Heart left ventricle (tissue), 16 donors: ENCODE measurements at regions of chr19 and their contacts with region 1.

Region 1: GRCh38 chr19:11125994-11126685 is 29.4 kb downstream of the SPC24 start:
- DNase-seq: peak; percentile 70 to 87 (median 82)
- ATAC-seq: peak; percentile 51 to 76 (median 68)
- H3K4me3 ChIP-seq: no peak overlapping the region
- H3K27ac ChIP-seq: peak overlapping the region in 1 of 12 donors; percentile 32
- H3K4me1 ChIP-seq: peaks cover 0 to 20% (median 11%) of the 10 kb centered on the region in 12 donors
- H3K27me3 ChIP-seq: no peaks in the 10 kb centered on the region
- CTCF ChIP-seq: peak; percentile 67 to 88 (median 80)
- POLR2A ChIP-seq: no peak

Region 2: GRCh38 chr19:10936661-10937084 is 189.5 kb before region 1 on chr19:
- intact Hi-C with region 1: loop called in 6 of 10 experiments (anchors 5 to 10 kb)
- DNase-seq: no peak
- ATAC-seq: peak; percentile 60 to 84 (median 79)
- H3K4me3 ChIP-seq: peak overlapping the region in 2 of 12 donors; percentile 0 to 26
- H3K27ac ChIP-seq: no peak overlapping the region
- H3K4me1 ChIP-seq: peaks cover 0 to 8% (median 0%) of the 10 kb centered on the region in 12 donors
- H3K27me3 ChIP-seq: no peaks in the 10 kb centered on the region
- CTCF ChIP-seq: peak; percentile 45 to 63 (median 58)
- POLR2A ChIP-seq: no peak

Region 3: DNA sequence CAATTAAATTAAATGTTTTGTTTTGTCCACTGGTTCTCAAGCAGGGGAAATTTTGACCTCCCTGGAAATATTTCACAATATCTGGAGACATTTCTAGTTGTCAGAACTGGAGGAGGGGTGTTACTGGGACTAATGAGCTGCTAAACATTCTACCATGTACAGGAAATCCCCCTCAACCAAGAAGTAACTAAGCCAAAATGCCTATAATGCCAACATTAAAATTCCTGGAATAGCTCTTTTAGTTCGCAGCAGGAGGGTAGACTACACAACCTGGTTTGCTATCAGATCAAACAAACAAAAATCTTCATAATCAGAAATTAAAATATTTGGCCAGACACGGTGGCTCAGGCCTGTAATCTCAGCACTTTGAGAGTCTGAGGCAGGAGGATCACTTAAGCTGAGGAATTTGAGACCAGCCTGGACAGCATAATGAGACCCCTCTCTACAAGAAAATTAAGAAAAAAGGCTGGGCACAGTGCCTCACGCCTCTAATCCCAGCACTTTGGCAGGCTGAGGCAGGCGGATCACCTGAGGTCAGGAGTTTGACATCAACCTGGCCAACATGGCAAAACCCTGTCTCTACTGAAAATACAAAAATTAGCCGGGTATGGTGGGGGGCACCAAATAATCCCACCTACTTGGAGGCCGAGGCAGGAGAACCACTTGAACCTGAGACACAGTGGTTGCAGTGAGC is 179.0 kb before region 1 on chr19:
- intact Hi-C with region 1: loop called in 1 of 10 experiments (anchors 10 kb)
- DNase-seq: no peak
- ATAC-seq: no peak
- H3K4me3 ChIP-seq: no peak overlapping the region
- H3K27ac ChIP-seq: no peak overlapping the region
- H3K4me1 ChIP-seq: peaks cover 0 to 5% (median 0%) of the 10 kb centered on the region in 12 donors
- H3K27me3 ChIP-seq: no peaks in the 10 kb centered on the region
- CTCF ChIP-seq: no peak
- POLR2A ChIP-seq: no peak

Region 4: DNA sequence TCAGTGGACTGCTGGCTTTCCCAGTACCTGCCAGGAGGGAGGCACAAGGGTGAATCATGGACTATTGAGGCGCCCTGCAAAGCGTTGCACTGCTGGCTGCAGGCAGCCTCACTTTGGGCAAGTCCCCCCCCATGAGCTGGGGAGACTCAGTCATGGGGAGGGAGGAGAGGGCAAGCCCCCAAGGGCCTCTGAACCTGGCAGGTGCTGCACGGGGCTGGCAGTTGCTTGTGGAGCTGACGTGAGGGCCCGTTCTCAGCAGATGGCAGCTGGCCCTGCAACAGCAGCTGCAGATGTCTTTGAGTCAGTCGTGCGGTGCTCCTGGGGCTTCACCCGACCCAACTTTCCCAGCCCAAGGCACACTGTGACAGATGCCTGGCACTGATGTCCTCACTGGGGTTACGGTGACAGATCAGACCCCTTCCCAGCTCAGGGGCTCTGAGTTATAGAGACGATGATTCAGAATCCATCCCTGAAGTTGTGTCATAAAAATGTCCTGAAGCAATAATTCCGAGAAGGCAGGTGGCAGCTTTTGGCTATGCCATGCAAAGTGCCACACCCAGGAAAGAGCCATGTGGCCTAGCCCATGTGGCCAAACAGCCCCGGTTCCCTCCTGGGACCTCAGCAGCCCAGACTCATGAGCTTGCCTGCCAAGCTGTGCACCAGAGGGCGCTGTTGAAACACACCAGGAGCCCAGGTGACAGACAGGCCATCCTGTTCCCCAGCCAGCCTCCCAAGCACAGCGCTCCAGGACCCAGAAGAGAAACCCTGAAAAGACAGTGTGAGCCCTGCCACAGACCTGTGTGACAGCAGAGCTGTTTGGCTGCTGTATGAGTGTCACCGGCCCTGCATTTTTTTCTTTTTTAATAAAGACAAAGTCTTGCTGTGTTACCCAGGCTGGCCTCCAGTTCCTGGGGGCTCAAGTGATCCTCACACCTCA is 90.4 kb before region 1 on chr19:
- intact Hi-C with region 1: loop called (anchors 2 to 10 kb)
- DNase-seq: peak; percentile 89 to 95 (median 92)
- ATAC-seq: peak; percentile 93 to 96 (median 93)
- H3K4me3 ChIP-seq: no peak overlapping the region
- H3K27ac ChIP-seq: peak overlapping the region in 4 of 12 donors; percentile 9 to 33 (median 20)
- H3K4me1 ChIP-seq: peaks cover 0 to 9% (median 4%) of the 10 kb centered on the region in 12 donors
- H3K27me3 ChIP-seq: no peaks in the 10 kb centered on the region
- CTCF ChIP-seq: peak; percentile 73 to 92 (median 87)
- POLR2A ChIP-seq: no peak

Region 5: GRCh38 chr19:11203194-11204075 is 77.3 kb after region 1 on chr19:
- intact Hi-C with region 1: loop called in 2 of 10 experiments (anchors 1 kb)
- DNase-seq: peak; percentile 82 to 89 (median 88)
- ATAC-seq: peak; percentile 75 to 83 (median 78)
- H3K4me3 ChIP-seq: peak overlapping the region in 9 of 12 donors; percentile 1 to 43 (median 35)
- H3K27ac ChIP-seq: peak overlapping the region; percentile 78 to 97 (median 90)
- H3K4me1 ChIP-seq: peaks cover 0 to 42% (median 26%) of the 10 kb centered on the region in 12 donors
- H3K27me3 ChIP-seq: no peaks in the 10 kb centered on the region
- CTCF ChIP-seq: peak; percentile 72 to 94 (median 86)
- POLR2A ChIP-seq: no peak

Region 6: GRCh38 chr19:11209839-11210655 is 83.9 kb after region 1 on chr19:
- intact Hi-C with region 1: loop called in 1 of 10 experiments (anchors 5 kb)
- DNase-seq: no peak
- ATAC-seq: no peak
- H3K4me3 ChIP-seq: no peak overlapping the region
- H3K27ac ChIP-seq: no peak overlapping the region
- H3K4me1 ChIP-seq: peaks cover 0 to 4% (median 2%) of the 10 kb centered on the region in 12 donors
- H3K27me3 ChIP-seq: no peaks in the 10 kb centered on the region
- CTCF ChIP-seq: no peak
- POLR2A ChIP-seq: no peak